ENCODE measurements at regions of chr7 and their contacts with region 1.

Region 1: DNA sequence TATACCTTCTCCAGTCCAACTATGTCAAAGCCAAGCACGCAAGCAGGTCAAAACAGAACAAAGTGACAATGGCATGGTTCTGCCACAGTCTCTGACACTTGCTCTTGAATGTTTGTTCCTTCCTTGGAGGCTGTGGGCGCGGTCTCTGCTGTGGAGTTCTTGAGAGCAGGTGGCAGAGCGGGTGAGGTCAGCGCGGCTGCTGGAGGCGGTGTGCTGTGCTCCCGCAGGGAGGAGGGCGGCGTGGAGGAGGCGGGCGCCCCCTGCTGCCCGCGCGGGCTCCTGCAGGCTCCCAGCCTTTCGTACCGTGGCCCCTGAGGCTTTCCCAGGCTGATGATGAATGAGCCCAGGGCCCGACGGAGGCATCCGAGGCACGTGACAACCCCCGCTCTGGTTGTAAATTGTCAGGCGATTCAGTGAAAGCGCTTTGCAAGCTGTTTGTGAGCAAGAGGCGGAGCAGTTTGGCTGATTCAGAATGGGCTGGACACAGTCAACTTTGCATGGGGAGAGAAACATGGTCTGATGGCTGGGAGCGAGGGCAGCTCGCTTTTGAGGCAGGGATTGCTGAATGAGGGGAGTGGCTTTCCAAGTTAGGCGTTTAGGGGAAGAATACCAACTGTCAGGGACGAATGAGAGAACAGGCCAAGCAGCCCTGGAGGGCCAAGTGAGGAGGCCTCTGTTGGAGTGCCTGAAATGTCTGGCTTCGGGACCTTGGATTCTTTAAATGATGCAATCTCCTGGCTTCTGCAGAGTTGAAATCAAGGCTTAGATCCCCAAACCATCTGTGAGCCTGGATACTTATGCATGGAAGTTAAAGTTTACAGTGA is 46.6 kb downstream of the CDHR3 start:
- DNase-seq: peak; percentile 91
- ATAC-seq: peak; percentile 99
- H3K4me3 ChIP-seq: no peak overlapping the region
- H3K27ac ChIP-seq: no peak overlapping the region
- H3K4me1 ChIP-seq: no peaks in the 10 kb centered on the region
- H3K27me3 ChIP-seq: no peaks in the 10 kb centered on the region
- CTCF ChIP-seq: peak; percentile 99

Region 2: GRCh38 chr7:105934572-105935185 is 74.9 kb before region 1 on chr7:
- CTCF ChIA-PET with region 1: no interaction called
- POLR2A ChIA-PET with region 1: no interaction called
- intact Hi-C with region 1: loop called (anchors 2 kb)
- DNase-seq: peak; percentile 16
- ATAC-seq: peak; percentile 72
- H3K4me3 ChIP-seq: no peak overlapping the region
- H3K27ac ChIP-seq: no peak overlapping the region
- H3K4me1 ChIP-seq: peaks cover 7% of the 10 kb centered on the region; the same call in 1 of the 2 replicates
- H3K27me3 ChIP-seq: no peaks in the 10 kb centered on the region
- CTCF ChIP-seq: peak; percentile 51

Region 3: GRCh38 chr7:106041140-106041717 is 31.6 kb after region 1 on chr7:
- CTCF ChIA-PET with region 1: no interaction called
- POLR2A ChIA-PET with region 1: no interaction called
- intact Hi-C with region 1: loop called (anchors 1 kb)
- DNase-seq: peak; percentile 79
- ATAC-seq: peak; percentile 66
- H3K4me3 ChIP-seq: no peak overlapping the region
- H3K27ac ChIP-seq: no peak overlapping the region
- H3K4me1 ChIP-seq: peaks cover 5% of the 10 kb centered on the region
- H3K27me3 ChIP-seq: no peaks in the 10 kb centered on the region
- CTCF ChIP-seq: peak; percentile 97

Region 4: GRCh38 chr7:106080300-106080987 is 70.8 kb after region 1 on chr7:
- CTCF ChIA-PET with region 1: interaction called, 13 read pairs
- POLR2A ChIA-PET with region 1: no interaction called
- intact Hi-C with region 1: no loop called
- DNase-seq: no peak
- ATAC-seq: no peak
- H3K4me3 ChIP-seq: no peak overlapping the region
- H3K27ac ChIP-seq: no peak overlapping the region
- H3K4me1 ChIP-seq: no peaks in the 10 kb centered on the region
- H3K27me3 ChIP-seq: no peaks in the 10 kb centered on the region
- CTCF ChIP-seq: no peak

Measured in PC-3 (cell line).